Activated naive CD4-positive, alpha-beta T cell treated with anti-CD3 and anti-CD28 coated beads for 36 hours (primary cell): ENCODE measurements at regions of chr1 and their contacts with region 1.

Region 1: GRCh38 chr1:12177999-12178441 is 11.2 kb downstream of the TNFRSF1B start:
- DNase-seq: peak; percentile 96
- H3K4me3 Mint-ChIP-seq: peak overlapping the region; percentile 69
- H3K27ac Mint-ChIP-seq: peak overlapping the region; percentile 90
- H3K4me1 Mint-ChIP-seq: peaks cover 88% of the 10 kb centered on the region
- H3K27me3 Mint-ChIP-seq: no peaks in the 10 kb centered on the region

Region 2: GRCh38 chr1:12067900-12068821 is 109.9 kb before region 1 on chr1:
- CTCF ChIA-PET with region 1: no interaction called
- intact Hi-C with region 1: loop called (anchors 1 kb)
- DNase-seq: peak; percentile 89
- H3K4me3 Mint-ChIP-seq: peak overlapping the region; percentile 53
- H3K27ac Mint-ChIP-seq: peak overlapping the region; percentile 92
- H3K4me1 Mint-ChIP-seq: peaks cover 52% of the 10 kb centered on the region
- H3K27me3 Mint-ChIP-seq: peaks cover 31% of the 10 kb centered on the region

Region 3: GRCh38 chr1:12141128-12141850 is 36.7 kb before region 1 on chr1:
- CTCF ChIA-PET with region 1: no interaction called
- intact Hi-C with region 1: no loop called
- DNase-seq: no peak
- H3K4me3 Mint-ChIP-seq: no peak overlapping the region
- H3K27ac Mint-ChIP-seq: no peak overlapping the region
- H3K4me1 Mint-ChIP-seq: peaks cover 35% of the 10 kb centered on the region
- H3K27me3 Mint-ChIP-seq: no peaks in the 10 kb centered on the region

Region 4: DNA sequence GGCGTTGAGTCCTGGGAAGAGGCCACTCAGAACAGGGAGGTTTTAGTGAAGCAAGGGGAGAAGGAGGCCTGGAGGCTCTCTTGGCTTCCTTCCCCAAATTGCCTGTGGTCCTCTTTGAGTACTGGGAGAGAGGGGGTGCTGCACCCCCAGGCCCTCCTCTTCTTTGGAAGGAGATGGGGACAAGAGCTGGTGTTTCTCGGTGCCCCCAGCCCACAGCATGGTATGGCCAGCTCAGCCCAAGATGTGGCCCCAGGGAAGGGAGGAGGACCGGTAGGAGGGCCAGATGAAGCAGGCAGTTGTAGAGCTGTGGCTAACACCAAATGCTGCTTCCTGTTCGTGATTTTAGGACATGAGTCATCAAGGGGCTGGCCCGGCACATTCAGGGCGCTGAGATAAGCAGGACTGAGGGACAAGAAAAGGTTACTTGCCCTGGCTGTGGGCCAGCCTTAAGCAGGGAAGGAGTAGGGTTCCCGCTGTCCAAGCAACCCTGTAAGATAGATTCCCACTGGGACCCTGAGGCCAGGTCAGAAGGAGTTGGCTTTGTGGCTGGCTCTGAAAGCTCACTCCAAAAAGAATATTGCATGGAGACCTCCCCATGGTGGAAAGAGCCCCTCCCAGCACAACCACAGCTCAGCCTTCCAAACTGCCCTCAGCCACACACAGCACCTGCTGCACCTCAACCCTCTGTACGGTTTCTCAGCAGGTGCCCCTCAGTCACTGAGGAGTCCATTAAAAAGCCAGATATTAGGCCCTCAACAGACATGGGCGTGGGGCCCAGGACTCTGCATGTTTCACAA is 16.2 kb before region 1 on chr1:
- CTCF ChIA-PET with region 1: interaction called, 8 read pairs
- intact Hi-C with region 1: loop called (anchors 1 kb)
- DNase-seq: peak; percentile 92
- H3K4me3 Mint-ChIP-seq: no peak overlapping the region
- H3K27ac Mint-ChIP-seq: peak overlapping the region; percentile 83
- H3K4me1 Mint-ChIP-seq: peaks cover 70% of the 10 kb centered on the region
- H3K27me3 Mint-ChIP-seq: no peaks in the 10 kb centered on the region

Region 5: GRCh38 chr1:12208764-12209494 is 30.9 kb after region 1 on chr1:
- CTCF ChIA-PET with region 1: interaction called, 8 read pairs
- intact Hi-C with region 1: loop called (anchors 2 kb)
- DNase-seq: peak; percentile 95
- H3K4me3 Mint-ChIP-seq: no peak overlapping the region
- H3K27ac Mint-ChIP-seq: peak overlapping the region; percentile 37
- H3K4me1 Mint-ChIP-seq: peaks cover 42% of the 10 kb centered on the region
- H3K27me3 Mint-ChIP-seq: no peaks in the 10 kb centered on the region

Region 6: GRCh38 chr1:12511516-12512468 is 333.8 kb after region 1 on chr1:
- CTCF ChIA-PET with region 1: no interaction called
- intact Hi-C with region 1: loop called (anchors 5 kb)
- DNase-seq: no peak
- H3K4me3 Mint-ChIP-seq: peak overlapping the region; percentile 80
- H3K27ac Mint-ChIP-seq: peak overlapping the region; percentile 97
- H3K4me1 Mint-ChIP-seq: peaks cover 61% of the 10 kb centered on the region
- H3K27me3 Mint-ChIP-seq: no peaks in the 10 kb centered on the region